Esophagus muscularis mucosa (tissue), 4 donors: ENCODE measurements at regions of chr7 and their contacts with region 1.

Region 1: DNA sequence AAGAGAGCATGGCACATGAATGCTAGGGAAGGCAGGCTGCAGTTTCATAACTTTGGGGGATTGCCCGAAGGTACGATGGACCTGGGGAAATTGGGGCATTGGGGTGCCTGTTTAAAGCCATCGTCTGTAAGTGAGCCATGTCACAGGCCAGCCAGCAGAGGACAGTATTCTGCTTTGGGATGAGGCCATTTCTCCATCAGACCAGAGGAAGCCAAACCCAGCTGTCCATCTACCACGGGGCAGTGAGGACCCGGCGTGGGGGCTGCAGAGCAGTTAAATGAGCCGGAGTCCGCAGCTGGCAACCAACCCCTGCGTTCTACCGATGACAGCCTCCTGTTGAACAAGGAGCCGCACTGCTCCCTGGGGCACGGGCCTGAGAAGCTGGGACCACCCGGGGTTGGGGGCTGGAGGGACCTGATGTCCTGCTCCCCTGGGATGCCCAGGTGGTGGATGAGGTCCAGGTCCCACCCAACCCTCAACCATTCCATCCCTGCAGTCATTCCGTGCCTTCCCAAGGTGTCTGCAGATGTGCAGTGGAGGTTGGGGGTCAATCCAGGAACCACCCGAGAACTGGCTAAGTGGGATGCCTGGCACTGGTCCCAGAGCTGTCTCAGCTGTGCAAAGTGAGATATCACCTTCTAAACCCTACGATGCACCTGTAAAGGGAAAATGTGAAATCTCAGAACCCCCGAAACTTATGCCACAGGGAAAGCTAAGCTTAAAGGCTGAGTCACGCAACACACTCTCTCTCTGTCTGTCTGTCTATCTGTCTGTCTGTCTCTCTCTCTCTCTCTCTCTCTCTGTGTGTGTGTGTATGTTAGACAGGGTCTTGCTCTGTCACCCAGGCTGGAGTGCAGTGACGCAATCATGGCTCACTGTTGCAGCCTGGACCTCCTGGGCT is 12.1 kb upstream of the RHBDD2 start:
- DNase-seq: no peak
- H3K4me3 ChIP-seq: no peak overlapping the region
- H3K27ac ChIP-seq: no peak overlapping the region
- H3K4me1 ChIP-seq: peaks cover 6 to 10% (median 9%) of the 10 kb centered on the region in 4 donors
- H3K27me3 ChIP-seq: peaks cover 0 to 9% (median 0%) of the 10 kb centered on the region in 4 donors
- CTCF ChIP-seq: peak; percentile 83 to 93 (median 90)
- EP300 ChIP-seq: no peak
- POLR2A ChIP-seq: no peak

Region 2: DNA sequence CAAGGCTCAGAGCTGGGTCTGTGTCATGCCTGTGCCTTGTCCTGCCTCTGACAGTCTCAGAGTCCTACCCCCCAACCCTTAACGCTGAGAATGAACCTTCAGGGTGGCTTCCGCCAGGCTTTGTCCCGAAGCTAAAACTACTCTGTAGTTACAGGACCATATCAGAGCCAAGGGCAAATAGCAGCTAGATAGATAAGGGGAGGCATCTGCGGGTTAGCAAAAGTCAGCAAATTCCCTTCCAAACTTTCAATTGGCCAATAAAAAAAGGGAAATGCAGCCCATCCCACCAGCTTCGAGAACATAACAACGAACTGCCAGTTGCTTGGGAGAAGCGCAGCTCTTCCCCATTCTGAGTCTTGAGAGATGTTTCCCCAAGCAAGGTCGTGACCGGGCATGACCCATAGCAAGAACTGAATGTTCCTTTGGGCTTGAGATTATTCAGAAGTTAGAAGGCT is 70.9 kb before region 1 on chr7:
- intact Hi-C with region 1: no loop called
- DNase-seq: no peak
- H3K4me3 ChIP-seq: no peak overlapping the region
- H3K27ac ChIP-seq: peak overlapping the region in 3 of 4 donors; percentile 17 to 65 (median 31)
- H3K4me1 ChIP-seq: peaks cover 0 to 18% (median 15%) of the 10 kb centered on the region in 4 donors
- H3K27me3 ChIP-seq: peaks cover 0 to 9% (median 0%) of the 10 kb centered on the region in 4 donors
- CTCF ChIP-seq: no peak
- EP300 ChIP-seq: no peak
- POLR2A ChIP-seq: no peak

Region 3: GRCh38 chr7:75808106-75808505 is 58.6 kb before region 1 on chr7:
- intact Hi-C with region 1: no loop called
- DNase-seq: no peak
- H3K4me3 ChIP-seq: no peak overlapping the region
- H3K27ac ChIP-seq: no peak overlapping the region
- H3K4me1 ChIP-seq: no peaks in the 10 kb centered on the region
- H3K27me3 ChIP-seq: no peaks in the 10 kb centered on the region
- CTCF ChIP-seq: no peak
- EP300 ChIP-seq: no peak
- POLR2A ChIP-seq: no peak

Region 4: DNA sequence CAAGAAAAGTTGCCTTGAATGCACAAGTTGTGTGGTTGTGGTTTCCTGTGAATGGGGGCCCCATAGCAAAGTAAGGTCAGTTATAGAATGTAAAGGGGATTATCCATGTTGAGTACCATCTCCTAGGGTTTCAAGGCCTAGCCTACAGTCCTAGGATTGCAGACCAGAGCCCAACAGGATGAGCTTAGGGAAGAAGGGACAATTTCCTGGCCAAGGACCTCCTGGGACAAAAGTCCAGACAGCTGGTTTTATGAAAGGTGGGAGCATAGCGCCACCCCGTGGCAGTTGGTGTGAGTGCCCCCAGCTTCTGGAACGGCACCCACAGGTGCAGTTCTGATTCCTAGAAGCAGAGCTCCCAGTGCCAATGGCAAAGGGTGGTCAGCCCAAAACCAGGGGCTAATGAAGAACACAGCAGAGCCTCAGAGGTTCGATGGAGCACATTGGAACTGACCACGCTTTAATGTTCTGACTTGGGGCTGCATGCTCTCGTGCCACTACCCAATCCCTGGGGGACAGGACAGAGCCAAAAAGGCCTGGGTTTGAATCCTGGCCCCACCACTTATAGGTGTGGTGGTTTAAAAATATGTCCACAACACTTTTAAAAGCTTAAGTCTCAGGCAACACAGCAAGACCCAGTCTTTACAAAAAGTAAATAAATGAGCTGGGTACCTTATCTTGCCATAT is 153.4 kb after region 1 on chr7:
- intact Hi-C with region 1: loop called (anchors 2 kb)
- DNase-seq: no peak
- H3K4me3 ChIP-seq: no peak overlapping the region
- H3K27ac ChIP-seq: no peak overlapping the region
- H3K4me1 ChIP-seq: peaks cover 0 to 12% (median 3%) of the 10 kb centered on the region in 4 donors
- H3K27me3 ChIP-seq: no peaks in the 10 kb centered on the region
- CTCF ChIP-seq: peak; percentile 86 to 88 (median 87)
- EP300 ChIP-seq: no peak
- POLR2A ChIP-seq: no peak